Heart left ventricle (tissue), 16 donors: ENCODE measurements at regions of chrX and their contacts with region 1.

Region 1: DNA sequence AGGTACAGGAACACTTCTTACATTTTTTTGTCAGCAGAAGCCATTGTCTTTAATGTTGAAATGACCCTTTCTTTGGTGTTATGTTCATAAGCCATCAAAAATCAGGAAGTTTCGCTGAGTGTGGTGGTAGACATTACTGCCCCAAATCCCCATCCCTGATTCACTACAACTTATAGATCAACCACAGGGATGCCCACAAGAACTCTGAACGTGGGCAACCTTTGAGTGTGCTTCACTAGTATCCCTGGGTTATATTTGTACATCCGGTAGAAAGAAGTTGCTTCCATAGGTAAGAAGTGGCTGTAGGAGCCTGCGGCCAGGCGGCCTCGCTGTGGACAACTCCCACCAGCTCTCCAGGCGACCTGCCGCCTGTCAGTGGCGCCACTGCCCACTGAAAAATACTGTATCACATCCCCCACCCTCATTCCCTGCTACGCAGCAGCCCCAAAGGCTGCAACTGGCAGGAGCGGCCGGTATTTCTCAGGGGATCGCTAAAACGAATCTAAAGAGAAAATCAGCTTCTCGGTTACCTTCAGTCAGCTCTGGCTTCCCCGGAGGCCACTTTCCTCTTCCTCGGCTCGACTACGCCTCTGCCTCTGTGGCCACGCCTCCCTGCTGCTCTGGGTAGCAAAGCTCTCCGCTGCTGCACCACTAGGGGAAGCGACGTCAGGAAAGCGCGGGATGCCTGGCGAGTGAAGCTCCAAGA is 13.9 kb upstream of the ETDC start:
- DNase-seq: peak; percentile 8 to 72 (median 48)
- ATAC-seq: peak in 3 of 4 donors; percentile 73 to 78 (median 75)
- H3K4me3 ChIP-seq: peak overlapping the region in 9 of 12 donors; percentile 10 to 53 (median 33)
- H3K27ac ChIP-seq: no peak overlapping the region
- H3K4me1 ChIP-seq: no peaks in the 10 kb centered on the region
- H3K27me3 ChIP-seq: peaks cover 0 to 7% (median 0%) of the 10 kb centered on the region in 9 donors
- CTCF ChIP-seq: peak in 4 of 12 donors; percentile 8 to 29 (median 17)
- POLR2A ChIP-seq: no peak

Region 2: GRCh38 chrX:134990801-134991481 is 304.4 kb before region 1 on chrX and contains the start of gene SMIM10:
- intact Hi-C with region 1: no loop called
- DNase-seq: peak; percentile 82 to 89 (median 86)
- ATAC-seq: peak; percentile 91 to 99 (median 98)
- H3K4me3 ChIP-seq: peak within 1 kb of the TSS; percentile 30 to 80 (median 58)
- H3K27ac ChIP-seq: peak within 1 kb of the TSS in 11 of 12 donors; percentile 3 to 75 (median 59)
- H3K4me1 ChIP-seq: peaks cover 0 to 10% (median 0%) of the 10 kb centered on the region in 12 donors
- H3K27me3 ChIP-seq: peaks cover 0 to 12% (median 0%) of the 10 kb centered on the region in 9 donors
- CTCF ChIP-seq: no peak
- POLR2A ChIP-seq: no peak
- total RNA-seq, gene SMIM10: 3.5 to 7.4 (median 6.7) TPM

Region 3: GRCh38 chrX:135308345-135308855 is 13.0 kb after region 1 on chrX:
- intact Hi-C with region 1: loop called in 1 of 10 experiments (anchors 2 kb)
- DNase-seq: no peak
- ATAC-seq: no peak
- H3K4me3 ChIP-seq: no peak overlapping the region
- H3K27ac ChIP-seq: no peak overlapping the region
- H3K4me1 ChIP-seq: peaks cover 0 to 10% (median 0%) of the 10 kb centered on the region in 12 donors
- H3K27me3 ChIP-seq: no peaks in the 10 kb centered on the region
- CTCF ChIP-seq: no peak
- POLR2A ChIP-seq: no peak